ENCODE measurements at regions of chr5 and their contacts with region 1.

Region 1: GRCh38 chr5:103582364-103582763 is 19.8 kb upstream of the NUDT12 start:
- DNase-seq: peak; percentile 39
- H3K4me3 ChIP-seq: no peak overlapping the region
- CTCF ChIP-seq: peak; percentile 50

Region 2: GRCh38 chr5:103519550-103519949 is 62.8 kb before region 1 on chr5:
- in situ Hi-C with region 1: no loop called
- DNase-seq: no peak
- H3K4me3 ChIP-seq: no peak overlapping the region
- CTCF ChIP-seq: peak; percentile 32

Region 3: GRCh38 chr5:104178829-104179456 is 596.6 kb after region 1 on chr5:
- in situ Hi-C with region 1: loop called (anchors 25 kb)
- DNase-seq: peak; percentile 18
- H3K4me3 ChIP-seq: no peak overlapping the region
- CTCF ChIP-seq: peak; percentile 35

Measured in astrocyte of the cerebellum (primary cell).